ENCODE measurements at regions of chr7 and their contacts with region 1.

Region 1: GRCh38 chr7:148856891-148857290 is 27.2 kb downstream of the EZH2 start:
- DNase-seq: no peak
- ATAC-seq: peak; percentile 15
- H3K4me3 ChIP-seq: no peak overlapping the region
- H3K27ac ChIP-seq: no peak overlapping the region
- H3K4me1 ChIP-seq: no peaks in the 10 kb centered on the region
- H3K27me3 ChIP-seq: no peaks in the 10 kb centered on the region
- CTCF ChIP-seq: no peak

Region 2: DNA sequence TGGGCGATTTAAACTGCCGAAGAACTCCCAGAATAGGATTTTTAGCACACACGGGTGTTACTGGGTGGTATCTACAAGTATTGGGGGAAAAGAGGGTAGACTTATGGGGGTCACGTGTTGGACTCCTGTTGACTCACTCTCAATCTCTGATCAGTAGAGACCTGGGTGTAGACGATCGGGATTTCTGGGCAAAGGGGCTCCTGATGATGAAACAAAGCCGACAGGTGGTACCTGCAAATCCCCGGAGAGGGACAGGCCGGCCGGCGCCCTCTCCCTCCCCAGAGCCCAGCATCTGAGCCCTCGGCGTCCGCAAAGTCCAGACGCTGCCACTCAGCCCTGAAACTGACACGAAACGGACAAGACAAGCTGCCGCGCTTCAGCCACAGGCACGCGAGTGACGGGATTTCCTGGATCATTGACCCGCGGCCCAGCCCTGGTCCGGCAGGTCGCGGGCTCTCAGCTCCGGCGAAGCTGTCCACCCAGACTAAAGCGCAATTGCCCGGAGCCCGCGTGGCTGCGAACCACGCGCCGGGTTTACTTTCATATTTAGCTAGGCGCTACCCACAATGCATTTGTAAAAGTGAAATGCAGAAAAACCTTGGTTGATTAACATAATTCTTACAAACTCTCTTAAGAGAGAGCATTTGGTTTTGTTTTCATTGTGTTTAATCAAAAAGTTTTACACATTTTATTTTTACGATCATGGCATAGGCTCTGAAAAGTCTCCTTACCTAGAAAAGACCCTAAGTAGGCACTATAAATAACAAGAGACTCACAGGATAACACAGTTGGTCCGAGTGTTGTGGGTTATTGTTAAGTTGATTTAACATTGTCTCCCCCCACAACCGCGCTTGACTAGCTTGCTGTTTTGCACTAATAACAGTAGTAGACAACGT is 84.1 kb after region 1 on chr7:
- CTCF ChIA-PET with region 1: interaction called, 4 read pairs
- POLR2A ChIA-PET with region 1: no interaction called
- intact Hi-C with region 1: loop called (anchors 2 kb)
- DNase-seq: peak; percentile 71
- ATAC-seq: peak; percentile 76
- H3K4me3 ChIP-seq: peak overlapping the region; percentile 76
- H3K27ac ChIP-seq: peak overlapping the region; percentile 73
- H3K4me1 ChIP-seq: peaks cover 12% of the 10 kb centered on the region
- H3K27me3 ChIP-seq: no peaks in the 10 kb centered on the region
- CTCF ChIP-seq: no peak